CD4-positive, alpha-beta memory T cell (primary cell): ENCODE measurements at regions of chr22 and their contacts with region 1.

Region 1: DNA sequence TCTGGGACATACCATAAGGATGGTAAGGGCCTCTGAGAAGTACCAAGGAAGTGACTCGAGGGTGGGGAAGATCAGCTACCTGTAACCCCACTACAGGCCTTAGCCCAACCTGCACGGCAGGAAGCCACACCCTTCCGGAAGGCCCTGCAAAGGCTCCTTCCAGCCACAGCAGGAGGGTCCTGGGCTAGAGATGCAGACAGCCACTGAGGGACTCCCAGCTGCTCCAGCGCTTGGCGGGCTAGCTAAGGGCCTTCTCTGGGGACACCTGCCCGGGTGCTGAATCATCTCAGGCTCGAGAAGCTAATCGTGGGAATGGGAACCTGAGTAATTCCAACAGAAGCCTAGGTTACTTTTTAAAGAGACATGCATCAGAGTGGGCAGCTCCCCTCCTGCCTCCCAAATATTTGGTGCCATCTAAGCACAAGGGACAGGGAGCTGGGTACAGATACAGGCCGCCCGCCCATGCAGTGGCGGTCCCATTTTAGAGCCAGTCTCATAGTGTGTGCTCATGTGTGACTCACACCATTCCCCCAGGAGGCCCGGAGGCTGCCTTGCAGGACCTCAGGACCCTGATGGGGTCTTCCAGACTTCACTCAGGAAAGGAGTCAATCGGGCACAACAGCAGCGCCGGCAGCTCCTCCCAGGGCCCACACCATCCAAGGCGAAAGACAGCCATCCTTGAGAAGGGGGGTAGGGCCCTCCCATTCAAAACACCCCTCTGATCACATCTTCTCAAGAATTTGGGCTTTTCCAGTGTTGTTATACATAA is 8.0 kb downstream of the MYH9 start:
- DNase-seq: peak; percentile 58 to 80 (median 67)
- H3K4me3 ChIP-seq: peak overlapping the region; percentile 45 to 55
- H3K4me3 Mint-ChIP-seq: peak overlapping the region; percentile 75 to 92 (median 84)
- H3K27ac ChIP-seq: peak overlapping the region; percentile 70
- H3K27ac Mint-ChIP-seq: peak overlapping the region; percentile 92 to 99 (median 98)
- H3K4me1 ChIP-seq: peaks cover 96% of the 10 kb centered on the region
- H3K4me1 Mint-ChIP-seq: peaks cover 54 to 97% (median 77%) of the 10 kb centered on the region in 4 donors
- H3K27me3 ChIP-seq: no peaks in the 10 kb centered on the region
- H3K27me3 Mint-ChIP-seq: no peaks in the 10 kb centered on the region

Region 2: DNA sequence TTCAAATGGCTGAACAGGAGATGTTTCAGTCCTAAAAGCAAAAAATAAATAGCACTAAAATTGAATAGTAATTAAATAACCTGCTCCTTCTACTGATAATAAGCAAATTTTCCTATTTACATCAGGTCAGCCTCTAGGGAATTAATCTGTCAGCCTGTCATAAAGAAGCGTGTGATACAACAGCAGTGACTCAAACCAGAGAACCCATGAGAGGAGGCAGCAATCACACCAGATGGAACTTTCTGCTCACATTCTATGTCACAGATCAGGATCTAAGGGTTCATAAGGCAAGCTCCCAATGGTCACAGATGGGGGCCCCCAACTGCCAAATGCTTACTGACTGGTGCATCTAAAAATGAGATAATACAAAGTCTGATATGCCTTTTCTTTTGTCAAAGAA is 392.3 kb before region 1 on chr22:
- CTCF ChIA-PET with region 1: no interaction called
- POLR2A ChIA-PET with region 1: no interaction called
- intact Hi-C with region 1: no loop called
- DNase-seq: no peak
- H3K4me3 ChIP-seq: no peak overlapping the region
- H3K4me3 Mint-ChIP-seq: no peak overlapping the region
- H3K27ac ChIP-seq: no peak overlapping the region
- H3K27ac Mint-ChIP-seq: no peak overlapping the region
- H3K4me1 ChIP-seq: no peaks in the 10 kb centered on the region
- H3K4me1 Mint-ChIP-seq: no peaks in the 10 kb centered on the region
- H3K27me3 ChIP-seq: no peaks in the 10 kb centered on the region
- H3K27me3 Mint-ChIP-seq: peaks cover 9 to 14% of the 10 kb centered on the region in 2 donors

Region 3: DNA sequence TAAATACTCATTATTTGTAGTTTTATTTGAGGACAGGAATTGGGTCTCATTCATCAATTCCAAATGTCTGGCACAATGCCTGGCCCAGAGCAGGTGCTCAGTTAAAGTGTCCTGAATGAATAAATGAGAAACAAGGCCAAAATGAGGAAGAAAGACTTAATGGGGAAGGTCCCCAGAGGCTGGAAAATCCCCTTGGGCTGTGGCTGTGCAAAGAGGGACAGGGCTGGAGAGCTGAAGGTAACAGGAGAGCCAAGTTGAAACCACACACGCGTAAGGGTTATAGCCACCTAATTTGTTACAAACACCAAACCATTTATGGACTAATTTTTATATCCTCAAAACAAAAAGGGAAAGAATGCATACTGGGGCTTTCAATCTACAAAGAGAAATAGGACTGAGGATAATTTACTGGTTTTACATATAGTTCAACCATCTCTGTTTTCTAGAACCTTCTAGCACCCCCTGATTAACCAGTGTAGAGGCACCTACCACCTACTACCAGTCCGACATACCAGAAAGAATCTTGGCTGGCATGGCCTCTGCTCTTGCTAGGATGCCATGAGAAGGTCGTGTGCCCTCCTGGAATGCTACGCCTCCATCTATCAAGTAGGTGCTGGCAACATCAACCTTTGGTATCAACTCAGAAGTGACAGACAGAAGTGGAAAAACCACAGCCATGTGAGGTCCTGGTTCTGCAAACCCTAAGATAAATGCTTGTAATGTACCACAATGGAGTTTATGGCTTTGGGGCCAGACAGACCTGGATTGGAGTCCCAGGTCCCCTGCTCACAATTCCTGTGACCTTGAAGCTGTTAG is 20.4 kb before region 1 on chr22:
- CTCF ChIA-PET with region 1: interaction called, 14 read pairs
- POLR2A ChIA-PET with region 1: interaction called, 2,535 read pairs
- intact Hi-C with region 1: loop called (anchors 2 kb)
- DNase-seq: peak in 1 of 5 donors; percentile 63
- H3K4me3 ChIP-seq: no peak overlapping the region
- H3K4me3 Mint-ChIP-seq: peak overlapping the region; percentile 35 to 89 (median 76)
- H3K27ac ChIP-seq: peak overlapping the region; percentile 55
- H3K27ac Mint-ChIP-seq: peak overlapping the region; percentile 91 to 98 (median 95)
- H3K4me1 ChIP-seq: peaks cover 100% of the 10 kb centered on the region
- H3K4me1 Mint-ChIP-seq: peaks cover 79 to 99% (median 91%) of the 10 kb centered on the region in 4 donors
- H3K27me3 ChIP-seq: no peaks in the 10 kb centered on the region
- H3K27me3 Mint-ChIP-seq: no peaks in the 10 kb centered on the region

Region 4: GRCh38 chr22:36365020-36365411 is 14.8 kb before region 1 on chr22:
- CTCF ChIA-PET with region 1: interaction called, 14 read pairs
- POLR2A ChIA-PET with region 1: interaction called, 2,535 read pairs
- intact Hi-C with region 1: loop called (anchors 1 kb)
- DNase-seq: peak; percentile 84 to 98 (median 88)
- H3K4me3 ChIP-seq: no peak overlapping the region
- H3K4me3 Mint-ChIP-seq: peak overlapping the region; percentile 69 to 92 (median 80)
- H3K27ac ChIP-seq: peak overlapping the region; percentile 91
- H3K27ac Mint-ChIP-seq: peak overlapping the region; percentile 92 to 100 (median 97)
- H3K4me1 ChIP-seq: peaks cover 100% of the 10 kb centered on the region
- H3K4me1 Mint-ChIP-seq: peaks cover 73 to 100% (median 88%) of the 10 kb centered on the region in 4 donors
- H3K27me3 ChIP-seq: no peaks in the 10 kb centered on the region
- H3K27me3 Mint-ChIP-seq: no peaks in the 10 kb centered on the region

Region 5: GRCh38 chr22:36409911-36410756 is 30.4 kb after region 1 on chr22:
- CTCF ChIA-PET with region 1: interaction called, 10 read pairs
- POLR2A ChIA-PET with region 1: interaction called, 33 read pairs
- intact Hi-C with region 1: no loop called
- DNase-seq: peak; percentile 58 to 80 (median 64)
- H3K4me3 ChIP-seq: peak overlapping the region in 1 of 2 donors; percentile 44
- H3K4me3 Mint-ChIP-seq: peak overlapping the region; percentile 61 to 79 (median 72)
- H3K27ac ChIP-seq: peak overlapping the region; percentile 49
- H3K27ac Mint-ChIP-seq: peak overlapping the region; percentile 86 to 96 (median 91)
- H3K4me1 ChIP-seq: peaks cover 65% of the 10 kb centered on the region
- H3K4me1 Mint-ChIP-seq: peaks cover 35 to 68% (median 52%) of the 10 kb centered on the region in 4 donors
- H3K27me3 ChIP-seq: no peaks in the 10 kb centered on the region
- H3K27me3 Mint-ChIP-seq: no peaks in the 10 kb centered on the region

Region 6: DNA sequence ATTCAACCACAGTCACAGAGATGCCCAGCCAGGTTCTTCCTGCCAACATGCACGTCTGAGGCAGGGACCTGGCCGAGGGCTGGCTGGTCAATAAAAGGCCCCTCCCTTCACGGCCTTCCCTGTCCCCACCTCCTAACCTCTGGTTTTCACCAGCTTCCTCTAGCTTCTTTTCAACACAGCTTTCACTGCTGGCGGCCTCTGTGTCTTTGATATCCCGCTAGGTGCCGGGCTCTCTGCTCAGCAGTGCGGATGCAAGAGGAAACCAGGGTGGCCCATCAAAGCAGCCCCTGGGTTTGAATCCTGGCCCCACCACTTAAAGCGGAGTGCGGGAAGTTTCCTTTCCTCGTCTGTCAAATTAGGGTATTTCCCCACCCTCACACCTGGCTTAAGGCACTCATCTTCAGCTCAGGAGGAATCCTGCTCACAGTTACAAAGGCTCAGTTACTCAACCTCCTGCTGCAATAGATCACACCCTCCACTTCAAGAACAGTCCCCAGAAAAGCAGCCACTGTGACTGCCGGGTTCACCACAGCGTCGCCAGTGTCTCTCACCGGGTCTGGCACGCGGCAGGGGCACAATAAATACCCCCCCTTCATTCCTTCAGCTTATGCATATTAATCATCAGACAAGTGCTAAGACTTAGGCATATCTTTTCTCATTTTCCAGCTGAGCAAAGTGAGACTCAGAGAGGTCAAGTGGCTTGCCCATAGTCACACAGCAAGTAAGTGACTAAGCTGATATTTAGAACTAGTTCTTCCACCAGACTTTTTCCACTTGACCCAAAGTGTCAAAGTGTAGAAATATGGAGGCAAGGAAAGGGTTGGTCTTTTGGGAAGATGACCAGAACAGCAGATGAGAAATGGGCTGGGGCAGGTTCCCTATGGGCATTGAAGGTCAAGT is 56.0 kb after region 1 on chr22:
- CTCF ChIA-PET with region 1: interaction called, 3 read pairs
- POLR2A ChIA-PET with region 1: interaction called, 21 read pairs
- intact Hi-C with region 1: no loop called
- DNase-seq: peak; percentile 68 to 92 (median 76)
- H3K4me3 ChIP-seq: no peak overlapping the region
- H3K4me3 Mint-ChIP-seq: peak overlapping the region in 7 of 8 donors; percentile 60 to 84 (median 73)
- H3K27ac ChIP-seq: peak overlapping the region; percentile 57
- H3K27ac Mint-ChIP-seq: peak overlapping the region; percentile 82 to 97 (median 93)
- H3K4me1 ChIP-seq: peaks cover 29% of the 10 kb centered on the region
- H3K4me1 Mint-ChIP-seq: peaks cover 16 to 36% (median 25%) of the 10 kb centered on the region in 4 donors
- H3K27me3 ChIP-seq: no peaks in the 10 kb centered on the region
- H3K27me3 Mint-ChIP-seq: no peaks in the 10 kb centered on the region

Region 7: GRCh38 chr22:36454916-36455570 is 75.3 kb after region 1 on chr22:
- CTCF ChIA-PET with region 1: interaction called, 6 read pairs
- POLR2A ChIA-PET with region 1: interaction called, 94 read pairs
- intact Hi-C with region 1: no loop called
- DNase-seq: peak; percentile 93 to 95 (median 94)
- H3K4me3 ChIP-seq: peak overlapping the region; percentile 57 to 78
- H3K4me3 Mint-ChIP-seq: peak overlapping the region; percentile 53 to 85 (median 82)
- H3K27ac ChIP-seq: peak overlapping the region; percentile 88
- H3K27ac Mint-ChIP-seq: peak overlapping the region; percentile 92 to 98 (median 93)
- H3K4me1 ChIP-seq: peaks cover 55% of the 10 kb centered on the region
- H3K4me1 Mint-ChIP-seq: peaks cover 29 to 48% (median 44%) of the 10 kb centered on the region in 4 donors
- H3K27me3 ChIP-seq: no peaks in the 10 kb centered on the region
- H3K27me3 Mint-ChIP-seq: no peaks in the 10 kb centered on the region

Region 8: GRCh38 chr22:36481393-36482168 is 101.8 kb after region 1 on chr22 and contains the start of gene TXN2:
- CTCF ChIA-PET with region 1: interaction called, 9 read pairs
- POLR2A ChIA-PET with region 1: interaction called, 13 read pairs
- intact Hi-C with region 1: loop called (anchors 2 kb)
- DNase-seq: peak; percentile 97 to 99 (median 97)
- H3K4me3 ChIP-seq: peak within 1 kb of the TSS; percentile 80 to 86
- H3K4me3 Mint-ChIP-seq: peak within 1 kb of the TSS; percentile 90 to 100 (median 98)
- H3K27ac ChIP-seq: peak within 1 kb of the TSS; percentile 80
- H3K27ac Mint-ChIP-seq: peak within 1 kb of the TSS; percentile 93 to 100 (median 99)
- H3K4me1 ChIP-seq: peaks cover 22% of the 10 kb centered on the region
- H3K4me1 Mint-ChIP-seq: peaks cover 12 to 31% (median 17%) of the 10 kb centered on the region in 4 donors
- H3K27me3 ChIP-seq: no peaks in the 10 kb centered on the region
- H3K27me3 Mint-ChIP-seq: peaks cover 0 to 3% of the 10 kb centered on the region in 2 donors
- total RNA-seq, gene TXN2: 33.5 to 34.5 TPM

Region 9: GRCh38 chr22:36528341-36528740 is 148.6 kb after region 1 on chr22:
- CTCF ChIA-PET with region 1: no interaction called
- POLR2A ChIA-PET with region 1: no interaction called
- intact Hi-C with region 1: no loop called
- DNase-seq: no peak
- H3K4me3 ChIP-seq: peak overlapping the region; percentile 79 to 94
- H3K4me3 Mint-ChIP-seq: peak overlapping the region; percentile 89 to 97 (median 95)
- H3K27ac ChIP-seq: peak overlapping the region; percentile 87
- H3K27ac Mint-ChIP-seq: peak overlapping the region; percentile 95 to 99 (median 99)
- H3K4me1 ChIP-seq: peaks cover 20% of the 10 kb centered on the region
- H3K4me1 Mint-ChIP-seq: peaks cover 11 to 35% (median 16%) of the 10 kb centered on the region in 4 donors
- H3K27me3 ChIP-seq: no peaks in the 10 kb centered on the region
- H3K27me3 Mint-ChIP-seq: peaks cover 1% of the 10 kb centered on the region in 2 donors